ENCODE measurements at regions of chr17 and their contacts with region 1.

Region 1: DNA sequence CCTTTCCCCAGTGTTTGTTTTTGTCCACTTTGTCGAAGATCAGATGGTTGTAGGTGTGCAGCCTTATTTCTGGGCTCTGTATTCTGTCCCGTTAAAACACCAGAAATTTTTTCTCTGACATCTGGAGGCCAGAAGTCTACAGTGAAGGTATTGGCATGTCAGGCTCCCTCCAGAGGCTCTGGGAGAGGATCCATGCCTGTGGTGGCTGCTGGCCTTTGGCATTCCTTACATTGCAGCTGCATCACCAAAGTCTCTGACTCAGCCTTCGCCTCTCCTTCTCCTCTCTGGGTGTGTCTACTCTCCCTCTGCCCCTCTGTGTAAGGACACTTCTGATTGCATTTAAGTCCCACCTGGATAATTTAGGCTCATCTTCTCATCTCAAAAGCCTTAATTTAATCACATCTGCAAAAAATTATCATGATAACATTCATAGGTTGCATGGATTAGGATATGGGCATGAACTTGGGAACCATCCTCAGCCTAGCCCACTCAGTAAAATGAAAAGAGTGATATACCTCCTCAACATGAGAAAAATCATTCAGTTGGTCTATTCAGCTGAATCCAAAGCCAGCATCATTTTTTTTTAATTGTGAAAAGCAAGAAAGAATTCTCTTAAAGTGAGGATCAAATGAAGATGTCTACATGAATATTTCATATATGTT is 78.0 kb downstream of the MAP2K6 start:
- DNase-seq: no peak
- ATAC-seq: peak; percentile 90 to 98 (median 93)
- H3K4me3 ChIP-seq: no peak overlapping the region
- H3K27ac ChIP-seq: peak overlapping the region; percentile 27
- H3K4me1 ChIP-seq: peaks cover 27% of the 10 kb centered on the region
- H3K27me3 ChIP-seq: no peaks in the 10 kb centered on the region
- CTCF ChIP-seq: no peak

Region 2: DNA sequence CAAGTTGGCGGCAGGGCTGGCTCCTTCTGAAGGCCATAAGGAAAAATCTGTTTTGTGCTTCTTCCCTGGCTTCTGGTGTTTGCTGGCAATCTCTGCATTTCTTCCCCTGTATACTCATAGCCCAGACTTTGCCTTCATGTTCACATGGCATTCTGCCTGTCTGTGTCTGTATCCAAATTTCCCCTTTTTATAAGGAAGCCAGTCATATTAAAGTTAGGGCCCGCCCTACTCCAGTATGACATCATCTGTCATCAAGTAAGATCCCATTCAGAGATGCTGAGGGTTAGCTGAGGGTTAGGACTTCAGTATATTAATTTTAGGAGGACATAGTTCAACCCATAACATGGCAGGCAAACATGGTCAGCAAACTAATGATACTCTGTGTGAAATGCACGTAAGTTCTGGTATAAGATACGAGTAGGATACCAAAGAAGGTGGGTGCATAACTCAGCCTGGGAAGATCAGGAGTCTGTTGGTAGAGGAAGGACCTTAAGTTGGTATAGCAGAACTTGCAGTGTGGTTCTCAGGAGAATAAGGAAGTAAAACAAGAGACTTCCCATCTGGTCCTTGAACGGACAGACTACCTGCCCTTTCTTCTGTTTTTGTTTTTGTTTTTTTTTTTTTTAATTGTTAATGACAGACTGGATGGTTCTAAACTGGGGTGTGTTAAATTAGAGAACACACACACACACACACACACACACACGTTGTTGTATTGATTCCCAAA is 64.1 kb before region 1 on chr17:
- intact Hi-C with region 1: loop called in 1 of 2 experiments (anchors 5 kb)
- DNase-seq: no peak
- ATAC-seq: no peak
- H3K4me3 ChIP-seq: no peak overlapping the region
- H3K27ac ChIP-seq: peak overlapping the region; percentile 43
- H3K4me1 ChIP-seq: peaks cover 33% of the 10 kb centered on the region
- H3K27me3 ChIP-seq: no peaks in the 10 kb centered on the region
- CTCF ChIP-seq: no peak

Region 3: GRCh38 chr17:69523244-69523861 is 30.8 kb after region 1 on chr17:
- intact Hi-C with region 1: no loop called
- DNase-seq: no peak
- ATAC-seq: peak; percentile 61 to 80 (median 68)
- H3K4me3 ChIP-seq: peak overlapping the region; percentile 3
- H3K27ac ChIP-seq: peak overlapping the region; percentile 77
- H3K4me1 ChIP-seq: peaks cover 17% of the 10 kb centered on the region
- H3K27me3 ChIP-seq: no peaks in the 10 kb centered on the region
- CTCF ChIP-seq: peak; percentile 79